ENCODE measurements at regions of chr1 and their contacts with region 1.

Region 1: DNA sequence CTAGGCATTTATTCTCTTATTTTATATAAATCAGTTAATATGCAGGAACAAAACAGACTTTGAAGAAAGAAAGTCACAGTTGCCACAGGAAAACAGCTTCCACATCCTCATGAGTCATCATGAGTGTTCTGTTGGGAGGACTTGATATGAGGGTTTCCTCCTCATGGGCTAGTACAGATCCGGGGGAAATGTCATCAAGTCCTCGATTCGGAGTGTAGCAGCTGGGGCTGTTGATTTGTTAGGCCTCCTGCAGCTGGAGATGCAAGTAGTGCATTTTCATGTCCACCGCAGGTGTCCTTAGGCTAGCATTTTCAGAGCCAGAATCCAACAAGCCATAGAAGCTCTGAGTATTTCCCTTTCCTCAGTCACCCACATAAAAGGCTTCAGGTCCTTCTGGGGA is 36.7 kb downstream of the ADAM30 start:
- DNase-seq: peak; percentile 41
- H3K4me3 ChIP-seq: no peak overlapping the region
- H3K27ac ChIP-seq: no peak overlapping the region
- H3K4me1 ChIP-seq: no peaks in the 10 kb centered on the region
- H3K27me3 ChIP-seq: peaks cover 5% of the 10 kb centered on the region
- CTCF ChIP-seq: no peak

Region 2: DNA sequence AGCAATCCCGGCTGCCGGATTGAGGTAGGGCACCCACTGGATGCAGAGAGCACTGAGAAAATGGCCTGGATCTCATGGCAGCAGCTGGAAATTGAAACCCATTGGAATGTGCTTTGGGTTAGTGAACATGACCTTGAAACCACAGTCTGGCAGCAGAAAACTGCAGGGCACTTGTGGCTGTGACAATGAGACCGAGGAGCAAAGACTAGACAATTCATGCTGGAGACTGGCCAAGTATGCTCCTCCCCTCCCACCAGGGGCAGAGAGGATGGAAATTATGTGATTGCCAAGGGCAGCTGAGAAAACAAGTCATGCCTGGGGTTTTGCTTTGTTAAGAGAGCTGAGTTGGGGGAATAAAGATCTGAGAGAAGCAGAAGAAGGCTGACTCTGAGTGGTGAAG is 272.3 kb before region 1 on chr1:
- CTCF ChIA-PET with region 1: no interaction called
- POLR2A ChIA-PET with region 1: no interaction called
- intact Hi-C with region 1: no loop called
- DNase-seq: peak; percentile 52
- H3K4me3 ChIP-seq: no peak overlapping the region
- H3K27ac ChIP-seq: no peak overlapping the region
- H3K4me1 ChIP-seq: no peaks in the 10 kb centered on the region
- H3K27me3 ChIP-seq: no peaks in the 10 kb centered on the region
- CTCF ChIP-seq: no peak

Region 3: DNA sequence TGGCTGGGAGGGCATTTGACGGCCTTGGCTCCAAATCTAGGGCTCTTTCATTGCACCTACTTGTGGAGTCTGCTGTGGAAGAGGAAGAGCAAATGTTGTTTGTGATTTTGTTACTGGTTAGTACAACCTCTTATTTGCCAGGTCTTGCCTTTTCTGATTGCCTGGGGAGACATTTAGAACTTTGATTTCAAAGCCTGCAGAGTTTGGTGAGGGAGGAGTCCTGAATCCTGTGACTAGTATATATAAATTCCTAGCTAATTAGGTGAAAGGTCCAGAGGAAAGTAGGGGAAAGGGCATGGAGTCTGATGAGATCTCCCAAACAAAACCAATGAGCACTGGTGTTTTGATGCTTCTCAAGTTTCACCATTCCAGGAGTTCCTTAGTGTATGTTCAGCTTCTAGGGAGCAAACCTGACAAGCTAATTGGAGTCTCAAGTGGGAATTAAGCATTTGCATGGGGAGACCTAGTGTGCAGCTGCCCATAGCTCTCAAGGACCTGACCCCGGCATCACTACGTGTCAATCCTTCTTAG is 85.9 kb before region 1 on chr1:
- CTCF ChIA-PET with region 1: no interaction called
- POLR2A ChIA-PET with region 1: no interaction called
- intact Hi-C with region 1: no loop called
- DNase-seq: no peak
- H3K4me3 ChIP-seq: no peak overlapping the region
- H3K27ac ChIP-seq: no peak overlapping the region
- H3K4me1 ChIP-seq: peaks cover 15% of the 10 kb centered on the region
- H3K27me3 ChIP-seq: no peaks in the 10 kb centered on the region
- CTCF ChIP-seq: no peak

Region 4: DNA sequence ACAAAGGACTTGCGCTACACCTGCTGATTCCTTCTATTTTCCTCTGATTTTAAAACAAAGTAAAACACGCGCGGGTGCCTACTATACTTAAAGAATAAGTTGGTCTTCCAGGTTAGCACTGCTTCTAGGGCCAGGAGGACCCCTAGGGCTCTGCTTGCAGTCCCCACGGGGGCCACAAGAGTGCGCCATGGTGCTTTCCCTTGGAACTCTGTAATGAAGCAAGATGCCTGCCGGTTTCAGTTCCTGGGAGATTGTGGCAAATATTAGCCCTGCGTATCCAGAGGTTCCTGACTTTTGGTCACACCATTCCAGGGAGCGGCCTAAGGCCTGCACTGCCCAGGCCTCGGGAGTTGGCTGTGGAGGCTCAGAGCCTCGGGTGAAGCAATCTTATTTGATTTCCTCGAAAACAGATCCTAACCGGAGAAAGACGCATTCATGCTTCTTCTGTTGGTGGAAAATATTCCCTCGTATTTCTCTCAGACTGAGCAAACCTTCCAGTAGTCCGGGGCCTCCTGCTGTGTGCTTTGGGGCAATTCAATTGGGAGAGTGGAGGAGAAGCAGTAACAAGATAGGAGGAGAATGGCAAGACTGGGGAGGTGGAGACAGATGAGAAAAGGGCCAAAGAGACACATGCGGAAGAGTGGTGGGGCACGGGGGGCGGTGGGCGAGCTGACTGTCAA is 11.4 kb after region 1 on chr1:
- CTCF ChIA-PET with region 1: no interaction called
- POLR2A ChIA-PET with region 1: no interaction called
- intact Hi-C with region 1: loop called (anchors 1 kb)
- DNase-seq: peak; percentile 88
- H3K4me3 ChIP-seq: peak overlapping the region; percentile 26
- H3K27ac ChIP-seq: peak overlapping the region; percentile 10
- H3K4me1 ChIP-seq: no peaks in the 10 kb centered on the region
- H3K27me3 ChIP-seq: no peaks in the 10 kb centered on the region
- CTCF ChIP-seq: peak; percentile 97